ENCODE measurements at regions of chr5 and their contacts with region 1.

Region 1: GRCh38 chr5:129767906-129768380 is 20.0 kb downstream of the MINAR2 start:
- DNase-seq: peak; percentile 82
- ATAC-seq: peak; percentile 98
- H3K4me3 Mint-ChIP-seq: no peak overlapping the region
- H3K27ac Mint-ChIP-seq: no peak overlapping the region
- H3K4me1 Mint-ChIP-seq: no peaks in the 10 kb centered on the region
- H3K27me3 Mint-ChIP-seq: no peaks in the 10 kb centered on the region

Region 2: GRCh38 chr5:128213340-128213739 is 1554.6 kb before region 1 on chr5:
- CTCF ChIA-PET with region 1: interaction called, 5 read pairs
- POLR2A ChIA-PET with region 1: no interaction called
- intact Hi-C with region 1: loop called (anchors 1 to 2 kb)
- DNase-seq: peak; percentile 68
- ATAC-seq: no peak
- H3K4me3 Mint-ChIP-seq: no peak overlapping the region
- H3K27ac Mint-ChIP-seq: no peak overlapping the region
- H3K4me1 Mint-ChIP-seq: no peaks in the 10 kb centered on the region
- H3K27me3 Mint-ChIP-seq: peaks cover 5% of the 10 kb centered on the region

Region 3: GRCh38 chr5:129094087-129094923 is 673.6 kb before region 1 on chr5 and contains the start of gene ISOC1:
- CTCF ChIA-PET with region 1: interaction called, 5 read pairs
- POLR2A ChIA-PET with region 1: no interaction called
- intact Hi-C with region 1: loop called in 1 of 2 experiments (anchors 5 kb)
- DNase-seq: peak; percentile 95
- ATAC-seq: peak; percentile 94
- H3K4me3 Mint-ChIP-seq: peak within 1 kb of the TSS; percentile 79
- H3K27ac Mint-ChIP-seq: peak within 1 kb of the TSS; percentile 37
- H3K4me1 Mint-ChIP-seq: peaks cover 25% of the 10 kb centered on the region
- H3K27me3 Mint-ChIP-seq: peaks cover 8% of the 10 kb centered on the region
- total RNA-seq, gene ISOC1: 21.5 to 25.3 TPM

Region 4: DNA sequence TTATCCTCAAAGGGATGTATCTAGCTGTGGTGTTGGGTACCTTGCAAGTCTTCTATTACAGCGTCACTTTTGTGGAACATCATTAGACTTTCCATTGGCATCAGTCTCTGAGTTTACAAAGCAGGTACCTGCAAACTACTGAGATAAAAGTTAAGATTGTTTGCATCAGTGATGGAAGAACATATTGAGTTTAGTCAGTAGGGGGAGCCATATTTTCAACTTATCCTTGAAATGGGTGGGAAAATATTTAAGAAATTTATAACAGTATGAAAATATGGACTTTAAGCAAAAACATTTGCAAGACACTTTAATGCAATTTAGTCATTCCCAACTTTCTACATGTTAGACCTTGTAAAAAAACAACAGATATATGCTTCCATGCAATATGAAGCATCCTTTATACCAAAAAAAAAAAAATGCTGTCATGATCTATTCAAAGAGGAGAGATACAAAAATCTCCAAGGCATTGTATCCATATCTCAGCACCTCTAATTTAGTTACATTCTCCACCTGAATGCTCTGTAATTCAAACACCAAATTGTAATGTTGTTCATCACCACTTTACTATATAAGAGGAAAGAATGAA is 406.4 kb before region 1 on chr5:
- CTCF ChIA-PET with region 1: no interaction called
- POLR2A ChIA-PET with region 1: no interaction called
- intact Hi-C with region 1: loop called in 1 of 2 experiments (anchors 5 kb)
- DNase-seq: no peak
- ATAC-seq: no peak
- H3K4me3 Mint-ChIP-seq: no peak overlapping the region
- H3K27ac Mint-ChIP-seq: no peak overlapping the region
- H3K4me1 Mint-ChIP-seq: no peaks in the 10 kb centered on the region
- H3K27me3 Mint-ChIP-seq: no peaks in the 10 kb centered on the region

Region 5: DNA sequence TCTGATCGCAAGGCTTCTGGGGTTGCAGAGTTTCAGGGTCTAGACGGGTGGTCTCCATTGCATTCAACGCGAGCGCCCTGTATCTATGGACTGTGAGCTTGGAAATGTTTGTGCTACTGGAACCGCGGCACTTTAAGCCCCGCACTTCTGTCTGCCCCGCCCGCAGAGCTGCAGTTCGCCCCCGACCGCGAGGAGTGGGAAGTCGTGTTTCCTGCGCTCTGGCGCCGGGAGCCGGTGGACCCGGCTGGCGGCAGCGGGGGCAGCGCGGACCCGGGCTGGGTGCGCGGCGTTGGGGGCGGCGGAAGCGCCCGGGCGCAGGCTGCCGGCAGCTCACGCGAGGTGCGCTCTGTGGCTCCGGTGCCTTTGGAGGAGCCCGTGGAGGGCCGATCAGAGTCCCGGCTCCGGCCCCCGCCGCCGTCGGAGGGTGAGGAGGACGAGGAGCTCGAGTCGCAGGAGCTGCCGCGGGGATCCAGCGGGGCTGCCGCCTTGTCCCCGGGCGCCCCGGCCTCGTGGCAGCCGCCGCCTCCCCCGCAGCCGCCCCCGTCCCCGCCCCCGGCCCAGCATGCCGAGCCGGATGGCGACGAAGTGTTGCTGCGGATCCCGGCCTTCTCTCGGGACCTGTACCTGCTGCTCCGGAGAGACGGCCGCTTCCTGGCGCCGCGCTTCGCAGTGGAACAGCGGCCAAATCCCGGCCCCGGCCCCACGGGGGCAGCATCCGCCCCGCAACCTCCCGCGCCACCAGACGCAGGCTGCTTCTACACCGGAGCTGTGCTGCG is 306.8 kb before region 1 on chr5:
- CTCF ChIA-PET with region 1: interaction called, 3 read pairs
- POLR2A ChIA-PET with region 1: no interaction called
- intact Hi-C with region 1: loop called in 1 of 2 experiments (anchors 5 kb)
- DNase-seq: peak; percentile 54
- ATAC-seq: peak; percentile 68
- H3K4me3 Mint-ChIP-seq: no peak overlapping the region
- H3K27ac Mint-ChIP-seq: no peak overlapping the region
- H3K4me1 Mint-ChIP-seq: peaks cover 11% of the 10 kb centered on the region
- H3K27me3 Mint-ChIP-seq: peaks cover 39% of the 10 kb centered on the region

Region 6: DNA sequence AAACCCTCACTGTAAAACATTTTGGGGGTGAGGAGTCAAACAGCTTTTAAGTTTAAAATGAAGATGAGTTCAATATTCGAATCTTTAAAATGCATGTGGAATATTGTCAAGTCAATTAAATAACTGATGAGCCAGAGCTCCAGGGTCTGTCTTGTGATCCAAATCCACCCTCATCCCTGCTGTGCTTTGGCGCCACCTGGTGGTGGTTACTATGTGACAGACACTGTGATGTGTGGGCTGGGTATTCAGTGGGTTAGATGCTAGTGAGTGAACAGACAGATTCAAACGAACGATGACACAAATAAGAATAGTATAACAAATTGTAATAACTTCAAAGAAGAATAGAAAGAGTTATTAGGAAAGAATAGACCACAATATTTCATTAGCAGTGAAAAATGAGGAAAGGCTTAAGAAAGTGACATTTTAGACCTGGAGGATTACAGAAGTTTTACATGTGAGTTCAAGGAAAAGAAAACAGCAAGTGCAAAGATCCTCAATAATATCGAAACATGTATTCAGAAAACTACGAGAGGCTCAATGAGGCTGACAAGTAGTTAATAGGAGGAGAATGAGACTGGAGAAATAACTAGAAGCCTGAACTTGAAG is 84.9 kb after region 1 on chr5:
- CTCF ChIA-PET with region 1: interaction called, 122 read pairs
- POLR2A ChIA-PET with region 1: no interaction called
- intact Hi-C with region 1: loop called (anchors 1 kb)
- DNase-seq: peak; percentile 87
- ATAC-seq: peak; percentile 85
- H3K4me3 Mint-ChIP-seq: no peak overlapping the region
- H3K27ac Mint-ChIP-seq: no peak overlapping the region
- H3K4me1 Mint-ChIP-seq: no peaks in the 10 kb centered on the region
- H3K27me3 Mint-ChIP-seq: peaks cover 14% of the 10 kb centered on the region

Region 7: GRCh38 chr5:131109540-131110255 is 1341.8 kb after region 1 on chr5:
- CTCF ChIA-PET with region 1: no interaction called
- POLR2A ChIA-PET with region 1: no interaction called
- intact Hi-C with region 1: loop called (anchors 2 to 5 kb)
- DNase-seq: peak; percentile 30
- ATAC-seq: peak; percentile 79
- H3K4me3 Mint-ChIP-seq: no peak overlapping the region
- H3K27ac Mint-ChIP-seq: no peak overlapping the region
- H3K4me1 Mint-ChIP-seq: peaks cover 4% of the 10 kb centered on the region
- H3K27me3 Mint-ChIP-seq: no peaks in the 10 kb centered on the region

Measured in activated CD4-positive, alpha-beta T cell treated with anti-CD3 and anti-CD28 coated beads for 36 hours (primary cell).